CD8-positive, alpha-beta T cell (primary cell): ENCODE measurements at regions of chr7 and their contacts with region 1.

Region 1: GRCh38 chr7:106112117-106112971 is at the start of gene SYPL1:
- DNase-seq: peak; percentile 86 to 97 (median 95)
- ATAC-seq: peak; percentile 88
- H3K4me3 ChIP-seq: peak within 1 kb of the TSS; percentile 64 to 69
- H3K4me3 Mint-ChIP-seq: peak within 1 kb of the TSS; percentile 89
- H3K27ac ChIP-seq: peak within 1 kb of the TSS; percentile 84 to 85
- H3K27ac Mint-ChIP-seq: peak within 1 kb of the TSS; percentile 96
- H3K4me1 ChIP-seq: peaks cover 71% of the 10 kb centered on the region
- H3K4me1 Mint-ChIP-seq: peaks cover 72% of the 10 kb centered on the region
- H3K27me3 ChIP-seq: no peaks in the 10 kb centered on the region
- H3K27me3 Mint-ChIP-seq: no peaks in the 10 kb centered on the region
- CTCF ChIP-seq: no peak
- total RNA-seq, gene SYPL1: 50.0 to 51.2 TPM

Region 2: GRCh38 chr7:105013221-105013815 is 1099.0 kb before region 1 on chr7:
- CTCF ChIA-PET with region 1: no interaction called
- POLR2A ChIA-PET with region 1: no interaction called
- intact Hi-C with region 1: loop called (anchors 2 to 5 kb)
- DNase-seq: peak; percentile 91 to 97 (median 94)
- ATAC-seq: peak; percentile 56
- H3K4me3 ChIP-seq: peak overlapping the region; percentile 97 to 99
- H3K4me3 Mint-ChIP-seq: peak overlapping the region; percentile 99
- H3K27ac ChIP-seq: peak overlapping the region; percentile 99
- H3K27ac Mint-ChIP-seq: peak overlapping the region; percentile 100
- H3K4me1 ChIP-seq: peaks cover 42% of the 10 kb centered on the region
- H3K4me1 Mint-ChIP-seq: peaks cover 46% of the 10 kb centered on the region
- H3K27me3 ChIP-seq: no peaks in the 10 kb centered on the region
- H3K27me3 Mint-ChIP-seq: no peaks in the 10 kb centered on the region
- CTCF ChIP-seq: peak; percentile 52

Region 3: GRCh38 chr7:106022193-106022821 is 90.0 kb before region 1 on chr7:
- CTCF ChIA-PET with region 1: no interaction called
- POLR2A ChIA-PET with region 1: interaction called, 5 read pairs
- intact Hi-C with region 1: loop called in 1 of 2 experiments (anchors 1 kb)
- DNase-seq: peak; percentile 62 to 96 (median 84)
- ATAC-seq: peak; percentile 85
- H3K4me3 ChIP-seq: peak overlapping the region; percentile 11 to 20
- H3K4me3 Mint-ChIP-seq: peak overlapping the region; percentile 59
- H3K27ac ChIP-seq: peak overlapping the region; percentile 80 to 82
- H3K27ac Mint-ChIP-seq: peak overlapping the region; percentile 95
- H3K4me1 ChIP-seq: peaks cover 48% of the 10 kb centered on the region
- H3K4me1 Mint-ChIP-seq: peaks cover 68% of the 10 kb centered on the region
- H3K27me3 ChIP-seq: peaks cover 0 to 3% of the 10 kb centered on the region in 2 experiments
- H3K27me3 Mint-ChIP-seq: no peaks in the 10 kb centered on the region
- CTCF ChIP-seq: no peak

Region 4: DNA sequence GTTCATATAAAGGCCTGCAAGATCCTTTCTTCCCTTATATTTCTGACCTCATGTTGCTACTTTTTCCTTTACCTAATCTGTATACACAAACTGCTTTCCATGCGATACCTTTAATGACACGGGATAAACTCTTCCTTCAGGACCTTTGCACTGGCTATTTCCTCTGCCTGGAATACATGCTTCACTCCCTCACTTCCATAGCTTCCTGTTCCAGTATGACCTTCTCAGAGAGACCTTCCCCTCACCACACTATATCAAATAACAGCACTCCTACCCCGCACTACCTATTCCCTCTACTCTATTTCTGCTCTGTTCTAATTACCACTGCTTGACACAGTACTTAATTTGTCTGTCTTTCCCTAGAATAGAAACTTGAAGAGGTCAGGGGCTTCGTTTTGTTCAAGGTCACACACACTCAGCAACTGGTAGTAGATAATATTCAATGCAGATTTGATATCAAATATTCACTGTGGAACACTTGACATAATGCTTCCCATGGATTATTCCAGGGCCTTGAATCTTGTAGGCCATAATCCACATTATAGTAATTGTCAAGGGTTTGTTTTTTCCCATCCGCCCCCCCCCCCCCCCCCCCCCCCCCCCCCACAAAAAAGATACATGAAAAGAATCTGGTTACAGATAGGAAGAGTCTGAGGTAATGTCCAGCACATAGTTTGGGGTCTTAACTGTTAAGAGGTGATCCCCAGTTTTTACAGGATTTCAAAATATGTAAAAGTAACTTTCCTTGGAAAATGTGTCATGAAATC is 11.3 kb before region 1 on chr7:
- CTCF ChIA-PET with region 1: interaction called, 4 read pairs
- POLR2A ChIA-PET with region 1: interaction called, 12 read pairs
- intact Hi-C with region 1: loop called in 1 of 2 experiments (anchors 1 kb)
- DNase-seq: no peak
- ATAC-seq: no peak
- H3K4me3 ChIP-seq: no peak overlapping the region
- H3K4me3 Mint-ChIP-seq: no peak overlapping the region
- H3K27ac ChIP-seq: no peak overlapping the region
- H3K27ac Mint-ChIP-seq: peak overlapping the region; percentile 43
- H3K4me1 ChIP-seq: peaks cover 30% of the 10 kb centered on the region
- H3K4me1 Mint-ChIP-seq: peaks cover 67% of the 10 kb centered on the region
- H3K27me3 ChIP-seq: no peaks in the 10 kb centered on the region
- H3K27me3 Mint-ChIP-seq: no peaks in the 10 kb centered on the region
- CTCF ChIP-seq: no peak

Region 5: GRCh38 chr7:106659963-106660861 is 547.9 kb after region 1 on chr7:
- CTCF ChIA-PET with region 1: no interaction called
- POLR2A ChIA-PET with region 1: no interaction called
- intact Hi-C with region 1: loop called (anchors 5 kb)
- DNase-seq: peak; percentile 59 to 88 (median 75)
- ATAC-seq: peak; percentile 46
- H3K4me3 ChIP-seq: peak overlapping the region; percentile 76 to 87
- H3K4me3 Mint-ChIP-seq: peak overlapping the region; percentile 96
- H3K27ac ChIP-seq: peak overlapping the region; percentile 65 to 70
- H3K27ac Mint-ChIP-seq: peak overlapping the region; percentile 89
- H3K4me1 ChIP-seq: peaks cover 15% of the 10 kb centered on the region
- H3K4me1 Mint-ChIP-seq: peaks cover 37% of the 10 kb centered on the region
- H3K27me3 ChIP-seq: no peaks in the 10 kb centered on the region
- H3K27me3 Mint-ChIP-seq: no peaks in the 10 kb centered on the region
- CTCF ChIP-seq: peak; percentile 82

Region 6: GRCh38 chr7:107743567-107744344 is 1631.4 kb after region 1 on chr7 and contains the start of gene CBLL1:
- CTCF ChIA-PET with region 1: no interaction called
- POLR2A ChIA-PET with region 1: no interaction called
- intact Hi-C with region 1: loop called (anchors 2 to 5 kb)
- DNase-seq: peak; percentile 96 to 99 (median 98)
- ATAC-seq: peak; percentile 91
- H3K4me3 ChIP-seq: peak within 1 kb of the TSS; percentile 90 to 99
- H3K4me3 Mint-ChIP-seq: peak within 1 kb of the TSS; percentile 92
- H3K27ac ChIP-seq: peak within 1 kb of the TSS; percentile 99
- H3K27ac Mint-ChIP-seq: peak within 1 kb of the TSS; percentile 100
- H3K4me1 ChIP-seq: peaks cover 46% of the 10 kb centered on the region
- H3K4me1 Mint-ChIP-seq: peaks cover 59% of the 10 kb centered on the region
- H3K27me3 ChIP-seq: no peaks in the 10 kb centered on the region
- H3K27me3 Mint-ChIP-seq: no peaks in the 10 kb centered on the region
- CTCF ChIP-seq: peak; percentile 68
- total RNA-seq, gene CBLL1: 68.5 to 71.6 TPM